GM18951 (cell line): ENCODE measurements at regions of chr9 and their contacts with region 1.

Region 1: GRCh38 chr9:129610473-129611301 is 10.2 kb downstream of the C9orf50 start:
- POLR2A ChIP-seq: no peak

Region 2: DNA sequence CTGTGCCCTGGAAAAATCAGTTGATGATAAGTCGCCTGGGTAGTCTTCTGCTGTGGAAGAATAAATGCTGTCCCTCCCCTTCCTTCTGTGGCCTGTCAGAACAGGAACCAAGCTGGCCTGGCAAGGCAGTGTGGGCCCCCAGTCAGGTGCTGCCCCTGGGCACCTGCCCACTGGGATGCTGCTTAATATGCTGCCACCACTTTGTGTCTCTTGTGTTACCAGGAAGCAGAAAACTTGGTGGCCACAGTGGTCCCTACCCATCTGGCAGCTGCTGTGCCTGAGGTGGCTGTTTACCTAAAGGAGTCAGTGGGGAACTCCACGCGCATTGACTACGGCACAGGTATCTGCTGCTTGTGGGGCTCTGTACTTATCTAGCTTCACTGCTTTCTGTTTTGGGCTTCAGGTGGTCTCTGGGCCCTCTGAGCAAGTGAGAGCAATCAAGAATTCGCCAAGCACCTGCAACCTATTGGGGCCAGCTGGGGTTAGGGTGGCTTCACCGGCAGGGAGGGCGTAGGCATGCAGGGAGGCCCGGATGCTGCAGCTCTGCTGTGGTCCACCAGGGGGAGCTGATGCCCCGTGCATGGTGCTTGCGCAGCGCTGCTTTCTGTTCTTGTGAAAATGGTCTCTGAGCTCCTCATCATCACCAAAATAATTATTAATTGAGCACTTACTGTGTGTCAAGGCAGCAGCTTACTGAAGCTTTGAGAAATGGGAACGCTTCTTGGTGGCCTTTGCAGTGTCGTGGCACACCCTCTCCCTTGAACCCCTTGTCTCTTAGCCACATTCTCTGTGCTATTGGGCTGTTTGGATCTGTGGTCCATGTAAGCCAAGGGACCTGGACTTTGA is 479.2 kb before region 1 on chr9:
- in situ Hi-C with region 1: loop called (anchors 5 kb)
- POLR2A ChIP-seq: no peak

Region 3: DNA sequence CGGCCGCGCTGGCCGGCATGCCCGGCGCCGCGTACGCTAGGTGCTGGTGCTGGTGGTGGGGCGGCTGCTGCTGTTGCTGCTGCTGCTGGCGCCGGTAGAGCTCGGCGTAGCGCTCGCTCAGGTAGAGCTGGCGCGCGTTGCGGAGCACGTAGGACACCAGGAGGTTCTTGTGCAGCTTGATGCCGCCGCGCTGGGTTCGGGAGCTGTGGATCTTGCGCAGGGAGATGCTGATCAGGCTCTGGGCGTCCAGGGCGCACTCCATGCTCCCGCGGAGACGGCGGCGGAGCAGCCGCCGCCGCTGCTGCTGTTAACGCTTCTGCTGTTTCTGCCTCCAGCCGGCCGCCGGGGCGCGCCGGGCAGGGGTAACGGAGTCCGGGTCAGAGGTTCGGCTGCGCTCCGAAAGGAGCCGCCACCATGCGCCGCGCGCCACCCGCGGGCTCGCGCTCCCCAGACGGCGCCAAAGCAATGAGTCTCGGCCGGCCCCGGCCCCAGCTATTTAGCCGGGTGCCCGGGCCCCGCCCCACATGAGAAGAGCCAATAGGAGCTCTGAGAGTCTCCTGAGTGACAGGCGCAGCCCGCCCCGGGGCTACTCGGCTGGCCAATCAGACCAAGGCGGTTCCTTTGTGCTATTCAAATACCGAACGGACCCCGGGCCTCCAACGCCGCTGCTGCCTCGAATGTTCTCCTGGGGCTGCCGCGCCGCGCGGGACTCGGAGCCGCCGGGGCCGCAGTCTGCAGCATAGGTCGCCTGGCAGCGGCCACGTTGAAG is 432.7 kb before region 1 on chr9 and contains the start of gene IER5L:
- in situ Hi-C with region 1: loop called (anchors 10 kb)
- POLR2A ChIP-seq: peak; percentile 99

Region 4: GRCh38 chr9:129761901-129762364 is 151.2 kb after region 1 on chr9:
- in situ Hi-C with region 1: no loop called
- POLR2A ChIP-seq: no peak

Region 5: DNA sequence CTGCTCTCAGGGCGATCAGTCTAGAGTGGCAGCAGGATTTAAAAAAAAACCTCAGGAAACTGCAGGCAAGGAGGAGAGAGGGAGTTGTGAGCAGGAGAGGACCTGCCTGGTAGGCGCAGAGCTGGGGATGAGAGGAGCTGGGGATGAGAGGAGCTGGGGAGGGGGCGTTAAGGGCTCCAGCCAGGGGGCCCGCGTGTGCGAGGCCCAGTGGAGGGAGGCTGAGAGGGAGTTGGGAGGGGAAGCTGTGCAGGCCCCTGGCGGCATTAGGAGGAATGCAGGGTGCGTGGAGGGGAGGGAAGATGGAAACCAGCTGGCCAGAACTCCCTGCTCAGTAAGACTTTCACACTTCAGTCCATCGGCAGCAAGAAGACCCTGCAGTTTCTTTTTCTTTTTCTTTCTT is 609.7 kb after region 1 on chr9:
- in situ Hi-C with region 1: no loop called
- POLR2A ChIP-seq: no peak